Activated T-helper 2 cell treated with anti-CD3 and anti-CD28 coated beads, Interferon-gamma antibody, Interleukin-2, Interleukin-4, amounts not matched to agents 10 μg/mL and 5 μg/mL and 100 μg/mL, durations not matched to agents 14 hours and 24 hours and 36 hours (primary cell): ENCODE measurements at regions of chr1 and their contacts with region 1.

Region 1: GRCh38 chr1:234271243-234271606 is 102.0 kb upstream of the COA6 start:
- DNase-seq: no peak
- H3K4me3 Mint-ChIP-seq: no peak overlapping the region
- H3K27ac Mint-ChIP-seq: no peak overlapping the region
- H3K4me1 Mint-ChIP-seq: peaks cover 28% of the 10 kb centered on the region
- H3K27me3 Mint-ChIP-seq: peaks cover 20% of the 10 kb centered on the region

Region 2: DNA sequence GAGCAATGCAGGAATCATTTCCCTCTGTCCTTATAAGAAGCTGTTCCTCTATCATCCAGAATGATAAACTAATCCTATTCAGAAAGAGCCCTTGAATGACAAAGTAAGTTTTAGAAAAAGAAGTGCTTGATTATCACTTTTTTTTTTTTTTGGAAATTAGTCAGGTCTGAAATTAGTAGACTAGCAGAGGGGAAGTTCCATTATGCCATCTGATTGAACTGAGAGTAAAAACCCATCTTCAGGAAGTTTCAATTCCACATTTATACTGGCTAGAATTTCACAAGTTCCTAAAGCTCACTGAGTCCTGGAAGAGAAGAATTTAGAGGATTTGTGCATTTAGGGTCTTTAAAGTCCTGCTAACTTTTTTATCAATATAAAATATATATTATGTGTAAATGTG is 26.7 kb before region 1 on chr1:
- intact Hi-C with region 1: loop called (anchors 1 kb)
- DNase-seq: no peak
- H3K4me3 Mint-ChIP-seq: no peak overlapping the region
- H3K27ac Mint-ChIP-seq: no peak overlapping the region
- H3K4me1 Mint-ChIP-seq: peaks cover 3% of the 10 kb centered on the region
- H3K27me3 Mint-ChIP-seq: peaks cover 6% of the 10 kb centered on the region

Region 3: GRCh38 chr1:234260578-234260977 is 10.6 kb before region 1 on chr1:
- intact Hi-C with region 1: no loop called
- DNase-seq: no peak
- H3K4me3 Mint-ChIP-seq: no peak overlapping the region
- H3K27ac Mint-ChIP-seq: no peak overlapping the region
- H3K4me1 Mint-ChIP-seq: peaks cover 9% of the 10 kb centered on the region
- H3K27me3 Mint-ChIP-seq: peaks cover 15% of the 10 kb centered on the region

Region 4: DNA sequence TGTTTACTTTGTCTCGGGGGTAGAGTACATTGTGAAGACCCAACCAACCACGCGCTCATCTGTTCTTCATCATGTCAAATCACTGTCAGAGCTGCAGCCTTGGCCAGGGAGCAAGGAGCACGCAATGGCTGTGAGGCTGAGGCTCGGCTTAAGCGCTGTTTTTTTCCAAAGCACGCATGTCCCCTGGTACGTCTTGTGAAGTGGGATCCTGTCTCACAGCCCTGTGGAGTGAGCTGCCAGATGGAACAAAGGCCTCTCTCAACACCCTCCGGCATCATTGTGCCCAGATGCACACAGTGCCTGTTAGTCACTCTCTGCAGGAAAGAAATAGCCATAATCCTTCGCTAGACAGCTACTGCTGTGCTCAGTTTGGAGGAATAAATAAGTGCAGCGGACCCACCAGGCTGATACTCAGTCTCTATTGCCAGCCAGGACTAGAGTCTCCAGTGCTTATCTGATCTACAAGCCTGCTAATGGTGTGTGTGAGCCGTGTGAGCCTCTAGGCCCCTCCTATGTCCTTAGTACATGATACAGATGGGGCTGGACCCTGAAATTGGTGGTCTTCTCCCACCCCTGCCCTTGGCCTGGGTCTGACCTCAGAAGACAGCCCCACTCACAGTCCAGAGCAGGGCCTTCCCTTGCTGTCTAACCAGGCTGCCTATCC is 10.7 kb after region 1 on chr1:
- intact Hi-C with region 1: loop called (anchors 1 kb)
- DNase-seq: no peak
- H3K4me3 Mint-ChIP-seq: no peak overlapping the region
- H3K27ac Mint-ChIP-seq: no peak overlapping the region
- H3K4me1 Mint-ChIP-seq: no peaks in the 10 kb centered on the region
- H3K27me3 Mint-ChIP-seq: peaks cover 16% of the 10 kb centered on the region

Region 5: DNA sequence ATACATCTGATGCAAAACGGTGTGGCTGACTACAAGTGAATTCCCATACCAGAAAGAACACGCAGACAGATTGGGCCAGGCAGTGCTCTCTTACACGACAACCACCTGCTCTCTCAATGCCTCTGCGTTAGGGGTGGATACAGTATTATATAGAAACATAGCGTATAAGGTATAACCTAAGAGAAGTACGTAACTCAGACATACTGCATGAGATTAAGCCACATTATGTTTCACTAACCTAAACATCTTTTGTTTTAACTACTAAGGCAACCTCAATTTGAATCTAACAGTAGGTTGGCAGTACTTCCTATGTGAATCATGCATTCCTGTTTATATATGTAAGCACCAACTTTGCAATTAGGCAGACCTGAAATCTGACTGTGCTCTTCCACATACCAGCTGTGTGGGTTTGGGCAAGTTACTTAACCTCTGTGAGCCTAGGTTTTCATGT is 43.9 kb after region 1 on chr1:
- intact Hi-C with region 1: loop called (anchors 1 kb)
- DNase-seq: no peak
- H3K4me3 Mint-ChIP-seq: no peak overlapping the region
- H3K27ac Mint-ChIP-seq: peak overlapping the region; percentile 46
- H3K4me1 Mint-ChIP-seq: peaks cover 38% of the 10 kb centered on the region
- H3K27me3 Mint-ChIP-seq: peaks cover 14% of the 10 kb centered on the region